Heart right ventricle (tissue), 16 donors: ENCODE measurements at regions of chr2 and their contacts with region 1.

Region 1: GRCh38 chr2:39492095-39492590 is 55.1 kb upstream of the MAP4K3 start:
- DNase-seq: no peak
- ATAC-seq: peak; percentile 37 to 92 (median 73)
- H3K4me3 ChIP-seq: no peak overlapping the region
- H3K27ac ChIP-seq: peak overlapping the region in 9 of 10 donors; percentile 11 to 85 (median 64)
- H3K4me1 ChIP-seq: peaks cover 0 to 62% (median 27%) of the 10 kb centered on the region in 9 donors
- H3K27me3 ChIP-seq: no peaks in the 10 kb centered on the region
- CTCF ChIP-seq: no peak

Region 2: DNA sequence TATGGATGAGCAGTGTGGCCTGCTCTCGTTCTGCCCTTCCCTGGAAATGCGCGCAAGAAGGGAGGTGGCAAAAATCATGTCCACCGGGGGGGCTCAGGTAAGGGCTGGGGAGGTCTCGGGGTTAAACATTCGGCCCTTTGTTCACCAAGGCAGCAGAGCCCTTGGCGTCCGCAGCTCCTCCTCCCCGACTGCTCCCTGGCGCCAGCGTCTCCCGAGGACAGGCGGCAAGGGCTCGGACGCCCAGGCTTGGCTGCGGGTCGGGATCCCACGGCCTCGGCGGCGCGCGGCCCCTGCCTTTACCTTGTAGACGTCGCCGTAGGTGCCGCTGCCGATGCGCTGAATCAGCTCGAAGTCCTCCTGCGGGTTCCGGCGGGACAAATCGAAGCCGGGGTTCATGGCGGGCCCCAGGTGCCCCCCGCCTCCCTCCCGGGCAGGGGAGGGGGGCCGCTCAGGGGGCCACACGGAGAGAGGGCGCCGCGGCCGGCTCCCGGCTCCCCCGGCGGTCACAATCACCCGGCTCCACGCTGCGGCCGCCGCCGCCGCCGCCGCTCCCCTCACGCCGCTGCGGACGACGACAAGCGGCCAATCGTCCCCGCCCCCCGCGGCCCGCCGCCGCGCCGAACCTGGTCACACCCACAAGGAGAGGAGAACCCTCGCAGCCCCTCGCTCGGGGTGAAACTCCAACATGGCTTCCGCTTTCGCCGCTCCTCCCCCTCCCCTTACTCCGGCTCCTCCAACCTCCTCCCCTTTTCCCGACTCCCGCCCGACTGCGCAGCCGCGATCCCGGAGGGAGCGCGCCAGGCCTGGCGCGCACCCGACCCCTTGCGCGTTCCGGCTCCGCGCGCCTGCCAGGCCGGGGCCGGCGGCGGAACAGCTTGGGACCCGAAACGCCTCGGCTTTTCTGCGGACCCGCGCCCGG is 55.3 kb before region 1 on chr2 and contains the start of gene MAP4K3:
- intact Hi-C with region 1: loop called in 3 of 10 experiments (anchors 5 kb)
- DNase-seq: peak; percentile 93 to 96
- ATAC-seq: peak; percentile 92 to 95 (median 94)
- H3K4me3 ChIP-seq: peak within 1 kb of the TSS; percentile 65 to 97 (median 92)
- H3K27ac ChIP-seq: peak within 1 kb of the TSS; percentile 90 to 99 (median 98)
- H3K4me1 ChIP-seq: peaks cover 5 to 71% (median 55%) of the 10 kb centered on the region in 9 donors
- H3K27me3 ChIP-seq: no peaks in the 10 kb centered on the region
- CTCF ChIP-seq: no peak
- total RNA-seq, gene MAP4K3: 27.6 to 49.0 (median 40.2) TPM

Region 3: DNA sequence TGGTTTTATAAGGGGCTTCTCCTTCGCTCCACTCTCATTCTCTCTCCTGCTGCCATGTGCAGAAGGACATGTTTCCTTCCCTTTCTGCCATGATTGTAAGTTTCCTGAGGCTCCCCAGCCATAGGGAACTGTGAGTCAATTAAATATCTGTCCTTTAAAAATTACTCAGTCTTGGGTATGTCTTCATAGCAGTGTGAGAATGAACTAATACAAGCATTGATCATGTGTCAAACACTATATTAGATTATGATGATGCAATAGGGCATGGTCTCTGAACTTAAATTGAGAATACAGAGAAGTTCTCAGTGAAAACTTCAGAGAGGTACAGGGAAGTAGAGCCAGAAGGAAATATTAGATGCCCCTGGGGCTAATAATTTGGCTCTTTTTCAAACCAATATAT is 49.1 kb before region 1 on chr2:
- intact Hi-C with region 1: loop called in 3 of 10 experiments (anchors 5 kb)
- DNase-seq: no peak
- ATAC-seq: no peak
- H3K4me3 ChIP-seq: no peak overlapping the region
- H3K27ac ChIP-seq: no peak overlapping the region
- H3K4me1 ChIP-seq: peaks cover 0 to 23% (median 21%) of the 10 kb centered on the region in 9 donors
- H3K27me3 ChIP-seq: no peaks in the 10 kb centered on the region
- CTCF ChIP-seq: no peak

Region 4: GRCh38 chr2:39452386-39452785 is 39.8 kb before region 1 on chr2:
- intact Hi-C with region 1: loop called in 1 of 10 experiments (anchors 5 kb)
- DNase-seq: no peak
- ATAC-seq: no peak
- H3K4me3 ChIP-seq: no peak overlapping the region
- H3K27ac ChIP-seq: no peak overlapping the region
- H3K4me1 ChIP-seq: no peaks in the 10 kb centered on the region
- H3K27me3 ChIP-seq: no peaks in the 10 kb centered on the region
- CTCF ChIP-seq: no peak

Region 5: DNA sequence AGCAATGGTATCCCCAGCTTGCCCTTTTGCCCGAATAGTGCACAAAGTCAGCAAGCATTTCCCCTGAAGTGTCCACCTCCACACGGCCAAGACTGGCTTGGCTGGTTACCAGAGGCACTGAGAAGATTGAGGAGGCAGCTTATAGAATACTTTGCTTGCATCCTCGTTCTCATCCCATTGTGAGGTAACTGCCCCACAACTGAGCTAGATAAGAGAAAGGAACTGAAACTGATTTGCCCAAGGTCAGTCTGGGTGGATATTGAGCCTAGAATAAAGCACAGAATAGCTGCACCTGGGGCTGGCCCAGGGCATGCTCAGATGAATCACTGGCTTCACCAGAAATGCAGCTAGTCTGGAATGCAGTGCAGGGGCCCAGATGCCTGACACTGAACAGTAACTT is 22.3 kb before region 1 on chr2:
- intact Hi-C with region 1: loop called in 1 of 10 experiments (anchors 1 kb)
- DNase-seq: no peak
- ATAC-seq: peak; percentile 30 to 89 (median 78)
- H3K4me3 ChIP-seq: peak overlapping the region in 2 of 10 donors; percentile 2 to 5
- H3K27ac ChIP-seq: peak overlapping the region; percentile 12 to 77 (median 60)
- H3K4me1 ChIP-seq: peaks cover 4 to 44% (median 35%) of the 10 kb centered on the region in 9 donors
- H3K27me3 ChIP-seq: no peaks in the 10 kb centered on the region
- CTCF ChIP-seq: no peak

Region 6: DNA sequence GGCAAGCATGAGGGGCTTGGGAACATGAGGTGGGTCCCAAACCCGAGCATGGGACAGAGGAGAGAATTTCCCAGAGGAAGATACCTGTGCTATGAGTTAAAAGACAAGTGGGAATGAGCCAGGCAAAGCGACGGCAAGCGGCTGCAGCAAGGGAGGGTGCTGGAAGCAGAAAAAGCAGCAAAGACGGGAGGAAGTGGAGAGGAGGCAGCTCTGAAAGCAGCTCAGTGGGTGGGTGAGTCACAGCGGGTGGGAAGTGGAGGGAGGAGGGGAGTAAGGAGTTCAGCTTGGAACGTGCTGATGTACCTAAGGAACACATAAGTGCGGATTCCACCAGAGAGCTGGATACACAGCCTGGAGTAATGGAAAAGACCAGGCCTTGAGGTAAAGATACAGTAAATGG is 245.5 kb after region 1 on chr2:
- intact Hi-C with region 1: no loop called
- DNase-seq: no peak
- ATAC-seq: peak in 2 of 8 donors; percentile 38 to 51
- H3K4me3 ChIP-seq: no peak overlapping the region
- H3K27ac ChIP-seq: peak overlapping the region in 1 of 10 donors; percentile 27
- H3K4me1 ChIP-seq: peaks cover 0 to 13% (median 2%) of the 10 kb centered on the region in 9 donors
- H3K27me3 ChIP-seq: no peaks in the 10 kb centered on the region
- CTCF ChIP-seq: no peak